ENCODE measurements at regions of chr4 and their contacts with region 1.

Region 1: DNA sequence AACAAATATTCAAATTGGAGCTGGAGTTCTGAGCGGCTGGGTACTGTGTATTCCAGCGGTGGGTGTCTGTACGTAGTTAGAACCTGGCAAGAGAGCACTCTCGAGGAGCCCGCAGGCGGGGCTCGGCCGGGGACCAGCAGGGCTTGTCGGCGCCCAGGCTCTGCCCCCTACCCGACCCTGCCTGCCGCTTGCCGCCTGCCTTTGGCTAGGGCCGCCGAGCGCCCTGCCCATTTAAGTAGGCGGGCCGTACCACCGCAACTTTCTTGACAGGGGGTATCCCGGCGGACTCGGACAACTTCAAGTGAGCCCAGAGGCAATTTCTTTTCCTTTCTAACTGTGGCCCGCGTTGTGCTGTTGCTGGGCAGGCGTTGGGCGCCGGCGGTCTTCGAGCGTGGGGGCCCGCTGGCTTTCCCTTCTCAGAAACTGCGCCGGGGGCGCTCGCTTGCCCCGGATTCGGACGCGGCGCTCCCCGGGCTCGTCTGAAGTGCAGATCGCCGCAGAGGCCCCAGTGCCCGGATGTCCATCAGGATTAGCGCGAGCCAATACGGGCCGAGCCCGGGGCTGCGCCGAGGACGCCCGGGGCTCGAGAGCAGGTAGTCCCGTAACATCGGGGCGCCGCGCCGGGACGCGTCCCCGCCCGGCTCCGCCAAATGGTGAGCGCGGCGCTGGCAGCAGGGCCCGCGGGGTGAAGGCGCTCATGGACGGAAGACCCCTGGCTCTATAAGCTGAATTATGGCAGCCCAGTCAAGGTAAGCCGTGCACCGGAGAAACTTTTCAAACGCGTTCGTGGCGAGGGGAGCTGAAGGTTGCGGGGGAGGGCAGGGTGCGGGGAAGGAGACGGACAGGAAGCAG is 72.1 kb downstream of the AFF1 start:
- DNase-seq: peak; percentile 91
- ATAC-seq: peak; percentile 82
- H3K4me3 Mint-ChIP-seq: peak overlapping the region; percentile 97
- H3K27ac Mint-ChIP-seq: peak overlapping the region; percentile 97
- H3K4me1 Mint-ChIP-seq: peaks cover 49% of the 10 kb centered on the region
- H3K27me3 Mint-ChIP-seq: no peaks in the 10 kb centered on the region

Region 2: GRCh38 chr4:86286726-86287125 is 720.2 kb before region 1 on chr4:
- CTCF ChIA-PET with region 1: no interaction called
- POLR2A ChIA-PET with region 1: no interaction called
- intact Hi-C with region 1: no loop called
- DNase-seq: no peak
- ATAC-seq: no peak
- H3K4me3 Mint-ChIP-seq: no peak overlapping the region
- H3K27ac Mint-ChIP-seq: no peak overlapping the region
- H3K4me1 Mint-ChIP-seq: no peaks in the 10 kb centered on the region
- H3K27me3 Mint-ChIP-seq: no peaks in the 10 kb centered on the region

Region 3: GRCh38 chr4:86924811-86925210 is 82.1 kb before region 1 on chr4:
- CTCF ChIA-PET with region 1: interaction called, 12 read pairs
- POLR2A ChIA-PET with region 1: no interaction called
- intact Hi-C with region 1: loop called in 1 of 2 experiments (anchors 1 kb)
- DNase-seq: no peak
- ATAC-seq: no peak
- H3K4me3 Mint-ChIP-seq: no peak overlapping the region
- H3K27ac Mint-ChIP-seq: no peak overlapping the region
- H3K4me1 Mint-ChIP-seq: peaks cover 24% of the 10 kb centered on the region
- H3K27me3 Mint-ChIP-seq: no peaks in the 10 kb centered on the region

Region 4: DNA sequence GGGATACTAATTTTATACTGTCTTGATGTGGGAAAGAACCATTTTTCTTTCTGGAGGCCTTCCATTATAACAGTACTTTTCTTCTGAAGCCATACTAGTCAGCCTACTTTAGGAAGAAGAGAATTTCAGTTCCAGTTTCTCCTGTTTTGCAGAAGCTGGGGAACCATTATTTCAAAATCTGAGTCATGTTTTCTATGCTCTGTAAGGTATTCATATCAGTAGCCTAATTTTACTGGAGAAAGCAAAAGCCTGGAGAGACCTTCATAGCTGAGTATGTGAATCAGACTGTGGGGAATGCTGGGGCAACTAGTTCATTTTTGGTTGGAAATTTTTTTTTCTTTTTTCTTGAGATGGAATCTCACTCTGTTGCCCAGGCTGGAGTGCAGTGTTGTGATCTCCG is 49.7 kb before region 1 on chr4:
- CTCF ChIA-PET with region 1: interaction called, 4 read pairs
- POLR2A ChIA-PET with region 1: no interaction called
- intact Hi-C with region 1: loop called in 1 of 2 experiments (anchors 1 kb)
- DNase-seq: no peak
- ATAC-seq: peak; percentile 83
- H3K4me3 Mint-ChIP-seq: no peak overlapping the region
- H3K27ac Mint-ChIP-seq: peak overlapping the region; percentile 40
- H3K4me1 Mint-ChIP-seq: peaks cover 53% of the 10 kb centered on the region
- H3K27me3 Mint-ChIP-seq: no peaks in the 10 kb centered on the region

Region 5: DNA sequence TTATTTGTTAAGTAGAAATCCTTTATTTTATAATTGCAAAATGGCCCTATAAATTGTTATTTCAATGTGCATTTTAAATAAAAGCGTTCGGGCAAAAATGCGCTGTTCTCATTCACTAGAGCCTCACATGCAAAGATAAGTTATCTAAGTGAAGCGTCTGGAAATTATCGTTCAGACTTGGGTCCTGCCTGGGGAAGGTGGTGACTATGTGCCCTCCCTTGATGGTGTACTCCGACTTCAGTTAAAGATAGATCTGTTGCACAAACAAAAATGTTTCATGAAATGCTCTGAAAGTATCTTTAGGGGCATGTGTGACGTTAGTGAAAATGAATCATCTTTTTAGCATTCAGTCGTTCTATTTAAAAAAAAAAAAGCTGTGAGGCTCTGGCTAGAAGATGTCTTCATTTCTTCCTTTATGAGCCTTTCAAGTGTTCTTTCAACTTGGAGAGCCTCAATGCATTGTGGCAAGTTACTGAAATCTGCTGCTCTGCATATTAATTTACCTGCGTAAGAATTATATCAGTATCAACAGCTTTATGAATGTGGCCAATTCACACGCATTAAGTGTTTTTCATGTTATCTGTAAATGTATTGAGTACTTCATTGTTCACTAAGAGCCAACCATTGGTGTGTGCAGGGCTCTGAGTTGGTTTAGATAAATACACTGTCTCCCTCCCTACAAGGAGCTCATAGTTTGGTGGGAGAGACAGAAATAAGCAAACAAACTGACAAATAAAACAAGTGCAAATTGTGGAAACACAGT is 10.9 kb after region 1 on chr4:
- CTCF ChIA-PET with region 1: interaction called, 5 read pairs
- POLR2A ChIA-PET with region 1: interaction called, 11 read pairs
- intact Hi-C with region 1: loop called in 1 of 2 experiments (anchors 1 kb)
- DNase-seq: peak; percentile 58
- ATAC-seq: peak; percentile 91
- H3K4me3 Mint-ChIP-seq: peak overlapping the region; percentile 4
- H3K27ac Mint-ChIP-seq: peak overlapping the region; percentile 97
- H3K4me1 Mint-ChIP-seq: peaks cover 89% of the 10 kb centered on the region
- H3K27me3 Mint-ChIP-seq: no peaks in the 10 kb centered on the region

Region 6: DNA sequence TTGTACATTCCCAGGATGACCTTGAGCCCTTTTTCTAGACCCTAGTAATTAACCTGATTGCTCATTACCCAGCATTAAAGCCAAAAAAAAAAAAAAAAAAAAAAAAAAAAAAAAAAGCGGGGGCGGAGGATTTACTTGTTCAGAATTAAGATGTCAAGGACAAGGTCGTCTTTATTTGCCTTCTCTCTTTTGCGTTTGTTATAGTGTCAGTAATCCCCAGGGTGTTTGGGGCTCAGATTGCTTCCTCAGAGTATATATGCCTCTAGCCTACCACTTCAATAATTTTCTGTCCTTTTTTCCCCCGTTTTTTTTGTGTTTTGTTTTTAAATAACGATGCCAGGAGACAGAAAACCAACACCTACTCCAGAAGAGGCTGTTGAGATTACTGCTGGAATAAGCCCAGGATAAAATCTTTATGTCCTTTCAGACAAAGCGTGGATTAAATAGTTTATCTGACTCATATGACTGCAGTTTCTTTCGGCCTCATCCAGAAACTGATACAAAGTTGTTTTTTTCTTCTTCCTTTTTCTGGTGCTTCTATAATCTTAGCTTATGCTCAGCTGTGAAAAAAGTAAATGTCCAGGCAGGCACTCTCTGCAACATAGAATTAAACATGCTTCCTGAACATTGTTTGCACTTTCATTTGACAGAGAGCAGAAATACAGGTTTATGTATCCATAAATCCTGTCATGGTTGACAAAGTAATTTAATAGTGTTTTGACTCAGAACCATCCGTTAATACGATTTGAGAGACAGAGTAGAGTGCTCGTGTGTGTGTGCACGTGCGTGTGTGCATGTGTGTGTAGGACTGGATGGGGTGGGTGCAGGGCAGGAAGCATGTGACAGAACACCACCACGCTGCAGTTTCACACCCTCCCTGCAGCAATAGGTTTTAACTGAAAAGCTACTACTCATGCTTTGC is 66.6 kb after region 1 on chr4:
- CTCF ChIA-PET with region 1: no interaction called
- POLR2A ChIA-PET with region 1: interaction called, 5 read pairs
- intact Hi-C with region 1: loop called (anchors 1 to 5 kb)
- DNase-seq: peak; percentile 87
- ATAC-seq: peak; percentile 96
- H3K4me3 Mint-ChIP-seq: peak overlapping the region; percentile 63
- H3K27ac Mint-ChIP-seq: peak overlapping the region; percentile 91
- H3K4me1 Mint-ChIP-seq: peaks cover 51% of the 10 kb centered on the region
- H3K27me3 Mint-ChIP-seq: no peaks in the 10 kb centered on the region

Region 7: GRCh38 chr4:87103691-87104187 is 96.8 kb after region 1 on chr4:
- CTCF ChIA-PET with region 1: no interaction called
- POLR2A ChIA-PET with region 1: interaction called, 6 read pairs
- intact Hi-C with region 1: loop called in 1 of 2 experiments (anchors 1 kb)
- DNase-seq: no peak
- ATAC-seq: peak; percentile 66
- H3K4me3 Mint-ChIP-seq: peak overlapping the region; percentile 7
- H3K27ac Mint-ChIP-seq: peak overlapping the region; percentile 77
- H3K4me1 Mint-ChIP-seq: peaks cover 63% of the 10 kb centered on the region
- H3K27me3 Mint-ChIP-seq: no peaks in the 10 kb centered on the region

Region 8: GRCh38 chr4:87422104-87423052 is 415.5 kb after region 1 on chr4 and contains the start of gene NUDT9:
- CTCF ChIA-PET with region 1: no interaction called
- POLR2A ChIA-PET with region 1: no interaction called
- intact Hi-C with region 1: loop called in 1 of 2 experiments (anchors 10 kb)
- DNase-seq: peak; percentile 94
- ATAC-seq: peak; percentile 88
- H3K4me3 Mint-ChIP-seq: peak within 1 kb of the TSS; percentile 86
- H3K27ac Mint-ChIP-seq: peak within 1 kb of the TSS; percentile 99
- H3K4me1 Mint-ChIP-seq: peaks cover 33% of the 10 kb centered on the region
- H3K27me3 Mint-ChIP-seq: no peaks in the 10 kb centered on the region
- total RNA-seq, gene NUDT9: 9.8 to 13.3 TPM